Caco-2 (cell line): ENCODE measurements at regions of chr7 and their contacts with region 1.

Region 1: DNA sequence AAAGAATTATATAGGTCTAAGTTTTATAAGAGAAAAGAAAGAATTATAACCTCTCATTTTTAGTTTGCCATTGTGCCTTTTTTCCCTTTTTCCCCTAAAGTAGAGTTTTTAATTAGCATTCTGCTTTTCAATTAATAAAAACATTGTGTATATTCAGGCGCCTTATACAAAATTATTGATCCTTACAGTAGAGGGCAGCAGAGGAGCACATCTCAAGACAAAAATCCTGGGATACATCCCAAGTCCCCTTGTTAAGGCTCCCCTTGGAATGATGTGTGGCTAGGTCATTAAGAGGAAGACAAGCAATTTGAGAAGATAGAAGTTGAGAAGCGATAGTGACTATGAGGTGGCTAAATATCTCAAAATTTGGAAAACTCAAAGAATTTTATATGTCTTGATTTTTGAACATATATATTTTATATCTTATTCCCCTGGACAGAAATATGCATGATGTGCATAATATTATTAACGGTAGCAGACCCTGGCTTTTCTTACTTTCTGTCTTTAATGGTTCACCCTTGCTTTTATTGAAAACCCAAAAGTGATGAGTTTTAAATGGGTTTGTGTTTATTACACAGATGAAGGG is 19.1 kb upstream of the TPK1 start:
- DNase-seq: peak in 1 of 2 experiments; percentile 53
- H3K4me3 ChIP-seq: no peak overlapping the region
- H3K4me3 Mint-ChIP-seq: no peak overlapping the region
- H3K27ac Mint-ChIP-seq: no peak overlapping the region
- H3K4me1 ChIP-seq: peaks cover 28% of the 10 kb centered on the region
- H3K4me1 Mint-ChIP-seq: peaks cover 23% of the 10 kb centered on the region
- H3K27me3 ChIP-seq: no peaks in the 10 kb centered on the region
- H3K27me3 Mint-ChIP-seq: no peaks in the 10 kb centered on the region
- CTCF ChIP-seq: peak; percentile 56 to 70

Region 2: GRCh38 chr7:144738708-144739314 is 116.1 kb before region 1 on chr7:
- CTCF ChIA-PET with region 1: interaction called, 8 read pairs
- POLR2A ChIA-PET with region 1: no interaction called
- intact Hi-C with region 1: loop called (anchors 5 kb)
- DNase-seq: peak in 1 of 2 experiments; percentile 32
- H3K4me3 ChIP-seq: no peak overlapping the region
- H3K4me3 Mint-ChIP-seq: no peak overlapping the region
- H3K27ac Mint-ChIP-seq: no peak overlapping the region
- H3K4me1 ChIP-seq: peaks cover 4% of the 10 kb centered on the region; the same call in 1 of the 2 replicates
- H3K4me1 Mint-ChIP-seq: peaks cover 27% of the 10 kb centered on the region
- H3K27me3 ChIP-seq: no peaks in the 10 kb centered on the region
- H3K27me3 Mint-ChIP-seq: no peaks in the 10 kb centered on the region
- CTCF ChIP-seq: peak; percentile 63 to 73

Region 3: GRCh38 chr7:144892761-144893160 is 37.8 kb after region 1 on chr7:
- CTCF ChIA-PET with region 1: no interaction called
- POLR2A ChIA-PET with region 1: no interaction called
- intact Hi-C with region 1: no loop called
- DNase-seq: no peak
- H3K4me3 ChIP-seq: no peak overlapping the region
- H3K4me3 Mint-ChIP-seq: no peak overlapping the region
- H3K27ac Mint-ChIP-seq: no peak overlapping the region
- H3K4me1 ChIP-seq: no peaks in the 10 kb centered on the region
- H3K4me1 Mint-ChIP-seq: no peaks in the 10 kb centered on the region
- H3K27me3 ChIP-seq: no peaks in the 10 kb centered on the region
- H3K27me3 Mint-ChIP-seq: no peaks in the 10 kb centered on the region
- CTCF ChIP-seq: no peak

Region 4: GRCh38 chr7:144987686-144988085 is 132.8 kb after region 1 on chr7:
- CTCF ChIA-PET with region 1: no interaction called
- POLR2A ChIA-PET with region 1: no interaction called
- intact Hi-C with region 1: loop called (anchors 2 kb)
- DNase-seq: no peak
- H3K4me3 ChIP-seq: no peak overlapping the region
- H3K4me3 Mint-ChIP-seq: no peak overlapping the region
- H3K27ac Mint-ChIP-seq: no peak overlapping the region
- H3K4me1 ChIP-seq: no peaks in the 10 kb centered on the region
- H3K4me1 Mint-ChIP-seq: no peaks in the 10 kb centered on the region
- H3K27me3 ChIP-seq: no peaks in the 10 kb centered on the region
- H3K27me3 Mint-ChIP-seq: no peaks in the 10 kb centered on the region
- CTCF ChIP-seq: no peak

Region 5: DNA sequence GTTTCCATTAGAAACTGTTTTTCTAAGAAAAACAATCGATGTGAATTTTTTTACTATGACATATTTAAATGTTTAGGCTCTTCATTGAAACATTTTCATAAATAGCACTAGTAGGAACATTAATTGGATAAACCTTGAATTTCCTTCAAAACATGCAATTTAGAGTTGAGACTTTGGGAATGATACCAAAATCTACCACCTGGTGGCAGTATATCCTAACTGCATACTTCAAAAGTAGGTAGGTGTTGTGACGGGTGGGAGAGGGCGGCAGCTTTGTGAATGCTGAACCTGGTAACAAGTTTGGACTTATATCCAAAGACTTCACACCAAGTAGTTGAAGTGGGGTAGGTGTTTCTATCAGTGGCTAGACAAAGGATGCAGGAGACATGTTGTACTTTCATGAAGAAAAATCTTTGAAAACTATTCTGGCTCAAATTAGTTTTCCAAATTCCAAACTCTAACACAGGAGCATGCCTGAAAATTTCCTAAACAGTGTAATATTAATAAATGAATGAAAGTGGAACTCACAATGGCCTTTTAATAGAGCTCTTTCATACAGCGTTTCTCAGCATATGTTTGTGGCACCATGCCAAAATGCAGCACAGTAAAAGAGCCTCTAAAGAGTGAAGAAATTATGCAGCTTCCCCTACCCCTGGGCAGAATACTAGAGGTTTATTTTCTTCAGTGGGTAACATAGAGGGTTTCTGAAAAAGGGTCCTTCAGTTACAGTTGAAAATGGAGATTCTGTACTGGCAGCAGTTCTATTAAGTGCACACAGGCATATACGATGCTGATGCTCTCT is 181.9 kb after region 1 on chr7:
- CTCF ChIA-PET with region 1: no interaction called
- POLR2A ChIA-PET with region 1: no interaction called
- intact Hi-C with region 1: loop called (anchors 1 kb)
- DNase-seq: peak; percentile 43 to 69
- H3K4me3 ChIP-seq: no peak overlapping the region
- H3K4me3 Mint-ChIP-seq: no peak overlapping the region
- H3K27ac Mint-ChIP-seq: no peak overlapping the region
- H3K4me1 ChIP-seq: no peaks in the 10 kb centered on the region
- H3K4me1 Mint-ChIP-seq: no peaks in the 10 kb centered on the region
- H3K27me3 ChIP-seq: no peaks in the 10 kb centered on the region
- H3K27me3 Mint-ChIP-seq: peaks cover 11% of the 10 kb centered on the region
- CTCF ChIP-seq: peak; percentile 70 to 78

Region 6: DNA sequence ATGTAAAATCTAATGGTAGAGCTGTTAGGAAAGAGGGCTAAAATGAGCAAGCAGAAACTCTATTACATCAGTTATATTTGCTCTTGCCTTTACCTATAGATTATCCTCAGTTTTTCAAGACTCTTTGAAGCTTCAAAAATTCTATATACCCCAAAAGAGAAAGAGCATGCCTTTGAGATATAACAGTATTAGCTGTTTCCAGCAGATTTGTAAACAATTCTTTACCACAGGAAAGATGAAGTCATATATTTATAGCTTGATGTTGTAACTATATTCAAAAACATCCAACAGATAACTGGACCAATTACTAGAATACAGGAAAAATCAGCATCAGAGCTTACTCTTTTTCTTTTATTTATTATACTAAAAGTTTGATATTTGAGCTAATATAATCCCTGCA is 397.1 kb after region 1 on chr7:
- CTCF ChIA-PET with region 1: no interaction called
- POLR2A ChIA-PET with region 1: no interaction called
- intact Hi-C with region 1: no loop called
- DNase-seq: no peak
- H3K4me3 ChIP-seq: no peak overlapping the region
- H3K4me3 Mint-ChIP-seq: no peak overlapping the region
- H3K27ac Mint-ChIP-seq: no peak overlapping the region
- H3K4me1 ChIP-seq: no peaks in the 10 kb centered on the region
- H3K4me1 Mint-ChIP-seq: no peaks in the 10 kb centered on the region
- H3K27me3 ChIP-seq: no peaks in the 10 kb centered on the region
- H3K27me3 Mint-ChIP-seq: no peaks in the 10 kb centered on the region
- CTCF ChIP-seq: no peak